Calu3 (cell line): ENCODE measurements at regions of chr10 and their contacts with region 1.

Region 1: GRCh38 chr10:80699602-80700039 is 161.9 kb downstream of the SH2D4B start:
- DNase-seq: peak; percentile 90
- H3K4me3 Mint-ChIP-seq: no peak overlapping the region
- H3K27ac Mint-ChIP-seq: no peak overlapping the region
- H3K4me1 Mint-ChIP-seq: no peaks in the 10 kb centered on the region
- H3K27me3 Mint-ChIP-seq: peaks cover 80% of the 10 kb centered on the region
- CTCF ChIP-seq: peak; percentile 93

Region 2: DNA sequence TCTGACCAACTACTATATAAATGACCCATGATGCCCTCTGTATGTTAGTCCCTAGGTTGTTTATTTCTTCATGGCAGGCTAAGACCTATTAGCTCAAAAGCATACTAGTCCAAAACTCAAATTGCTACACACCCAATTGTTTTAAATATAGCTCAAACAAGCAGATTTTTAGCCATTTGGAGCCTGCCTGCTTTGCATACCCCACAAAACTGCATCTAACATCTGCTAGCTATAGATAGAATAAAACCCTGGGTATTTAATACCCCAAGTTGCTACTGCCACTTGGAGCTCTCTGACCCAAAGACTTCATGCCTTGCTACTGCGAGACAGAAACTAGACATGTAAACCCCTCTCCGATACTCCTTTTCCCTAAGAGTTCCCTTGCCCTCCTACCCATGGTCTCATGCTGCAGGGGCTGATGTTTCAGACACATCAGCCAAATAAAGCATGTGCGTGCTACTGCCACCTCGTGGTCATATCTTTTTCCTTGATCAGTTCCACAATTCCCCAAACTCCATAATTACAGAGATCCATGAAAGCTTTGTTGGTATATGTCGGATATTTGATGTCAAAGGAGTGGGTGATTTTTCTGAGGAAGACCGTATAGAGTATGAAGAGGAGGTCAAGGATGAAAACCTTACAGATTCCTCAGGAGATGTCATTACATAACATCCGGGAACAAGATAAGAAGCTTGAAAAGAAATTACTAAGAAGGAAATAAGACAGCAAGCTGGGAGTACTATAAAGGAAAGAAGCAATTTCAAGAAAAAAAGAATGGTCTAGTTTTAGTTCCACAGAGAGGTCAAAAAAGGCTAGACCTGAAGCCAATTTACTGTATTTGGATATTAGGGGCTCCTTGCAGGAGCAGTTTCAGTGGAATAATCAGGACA is 224.7 kb after region 1 on chr10:
- CTCF ChIA-PET with region 1: interaction called, 7 read pairs
- intact Hi-C with region 1: loop called (anchors 1 kb)
- DNase-seq: peak; percentile 71
- H3K4me3 Mint-ChIP-seq: no peak overlapping the region
- H3K27ac Mint-ChIP-seq: no peak overlapping the region
- H3K4me1 Mint-ChIP-seq: no peaks in the 10 kb centered on the region
- H3K27me3 Mint-ChIP-seq: peaks cover 22% of the 10 kb centered on the region
- CTCF ChIP-seq: peak; percentile 65

Region 3: DNA sequence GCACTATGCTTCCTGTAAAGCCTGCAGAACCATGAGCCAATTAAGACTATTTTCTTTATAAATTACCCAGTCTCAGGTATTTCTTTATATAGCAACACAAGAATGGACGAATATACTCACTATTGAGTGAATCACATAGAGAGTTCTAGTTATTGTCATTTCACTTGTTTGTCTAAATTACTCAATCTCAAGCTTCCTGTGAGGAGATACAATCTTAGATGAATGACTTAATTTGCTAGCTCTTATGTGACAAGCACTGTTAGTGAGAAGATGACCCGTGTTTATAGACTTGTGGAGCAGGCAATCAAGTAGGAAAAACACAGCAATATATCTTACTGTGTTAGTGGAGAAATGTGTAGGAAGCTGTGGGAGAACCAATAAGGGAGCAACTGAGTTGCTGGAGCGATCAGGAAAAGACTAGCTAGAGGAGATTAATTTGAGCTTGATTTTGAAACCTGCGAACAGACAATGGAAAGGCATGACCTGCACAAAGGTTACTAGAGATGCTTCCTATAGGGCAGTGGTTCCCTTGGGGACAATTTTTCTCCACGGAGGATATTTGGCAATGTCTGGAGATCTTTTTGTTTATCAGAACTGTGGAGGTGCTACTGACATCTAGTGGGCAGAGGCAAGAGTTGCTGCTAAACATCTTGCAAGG is 319.2 kb after region 1 on chr10:
- CTCF ChIA-PET with region 1: interaction called, 7 read pairs
- intact Hi-C with region 1: loop called (anchors 1 kb)
- DNase-seq: peak; percentile 52
- H3K4me3 Mint-ChIP-seq: peak overlapping the region; percentile 16
- H3K27ac Mint-ChIP-seq: no peak overlapping the region
- H3K4me1 Mint-ChIP-seq: peaks cover 8% of the 10 kb centered on the region
- H3K27me3 Mint-ChIP-seq: no peaks in the 10 kb centered on the region
- CTCF ChIP-seq: peak; percentile 76

Region 4: GRCh38 chr10:81838953-81839352 is 1139.3 kb after region 1 on chr10:
- CTCF ChIA-PET with region 1: interaction called, 3 read pairs
- intact Hi-C with region 1: loop called (anchors 2 kb)
- DNase-seq: peak; percentile 36
- H3K4me3 Mint-ChIP-seq: no peak overlapping the region
- H3K27ac Mint-ChIP-seq: no peak overlapping the region
- H3K4me1 Mint-ChIP-seq: peaks cover 16% of the 10 kb centered on the region
- H3K27me3 Mint-ChIP-seq: no peaks in the 10 kb centered on the region
- CTCF ChIP-seq: peak; percentile 46